CD4-positive, alpha-beta T cell (primary cell): ENCODE measurements at regions of chr11 and their contacts with region 1.

Region 1: GRCh38 chr11:33808228-33808828 is 34.0 kb upstream of the FBXO3 start:
- DNase-seq: peak; percentile 73 to 91 (median 81)
- ATAC-seq: peak; percentile 82
- H3K4me3 ChIP-seq: no peak overlapping the region
- H3K4me3 Mint-ChIP-seq: no peak overlapping the region
- H3K27ac ChIP-seq: no peak overlapping the region
- H3K27ac Mint-ChIP-seq: no peak overlapping the region
- H3K4me1 ChIP-seq: peaks cover 5% of the 10 kb centered on the region
- H3K4me1 Mint-ChIP-seq: no peaks in the 10 kb centered on the region
- H3K27me3 ChIP-seq: peaks cover 4 to 8% of the 10 kb centered on the region in 2 experiments
- H3K27me3 Mint-ChIP-seq: peaks cover 9% of the 10 kb centered on the region
- CTCF ChIP-seq: peak; percentile 88

Region 2: DNA sequence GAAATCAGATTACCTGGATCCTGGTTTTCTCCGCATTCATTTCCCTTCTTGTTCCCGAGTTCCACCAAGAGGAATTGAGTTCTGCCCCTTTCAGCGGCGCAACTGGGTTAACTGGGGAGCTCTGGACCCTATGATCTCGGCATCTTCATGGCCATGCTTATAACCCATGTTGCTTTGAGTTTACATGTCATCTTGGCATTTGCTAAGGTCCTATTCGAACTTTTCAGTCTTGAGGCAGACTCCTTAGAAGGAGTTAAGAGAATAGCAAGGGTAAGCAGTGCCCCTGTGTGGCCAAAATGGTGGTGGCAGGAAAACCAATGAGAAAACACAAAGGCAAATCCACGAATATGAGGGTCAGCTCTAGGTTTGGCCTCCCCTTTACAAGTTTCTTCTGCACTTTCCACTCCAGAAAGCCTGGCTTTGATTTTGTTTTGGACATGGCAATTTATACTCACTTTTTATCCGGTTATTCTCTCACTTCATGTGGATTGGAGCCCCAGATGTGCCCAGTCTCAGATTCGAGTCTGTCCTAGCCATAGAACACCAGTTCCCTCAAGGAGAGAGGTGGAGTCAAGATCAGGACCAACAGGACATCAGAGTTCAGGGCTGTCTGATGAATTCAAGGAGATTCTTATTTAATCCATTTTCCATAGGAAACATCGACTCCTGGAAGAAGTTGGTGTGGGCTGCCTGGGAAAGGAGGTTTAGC is 21.3 kb after region 1 on chr11:
- CTCF ChIA-PET with region 1: interaction called, 4 read pairs
- POLR2A ChIA-PET with region 1: no interaction called
- intact Hi-C with region 1: loop called (anchors 1 kb)
- DNase-seq: peak; percentile 9 to 77 (median 48)
- ATAC-seq: peak; percentile 88
- H3K4me3 ChIP-seq: peak overlapping the region; percentile 28
- H3K4me3 Mint-ChIP-seq: peak overlapping the region; percentile 79
- H3K27ac ChIP-seq: no peak overlapping the region
- H3K27ac Mint-ChIP-seq: no peak overlapping the region
- H3K4me1 ChIP-seq: peaks cover 11% of the 10 kb centered on the region
- H3K4me1 Mint-ChIP-seq: peaks cover 7% of the 10 kb centered on the region
- H3K27me3 ChIP-seq: peaks cover 35 to 54% of the 10 kb centered on the region in 2 experiments
- H3K27me3 Mint-ChIP-seq: peaks cover 69% of the 10 kb centered on the region
- CTCF ChIP-seq: peak; percentile 67

Region 3: GRCh38 chr11:33970984-33971466 is 162.7 kb after region 1 on chr11:
- CTCF ChIA-PET with region 1: no interaction called
- POLR2A ChIA-PET with region 1: no interaction called
- intact Hi-C with region 1: loop called in 1 of 2 experiments (anchors 5 kb)
- DNase-seq: peak in 5 of 14 experiments; percentile 4 to 49 (median 24)
- ATAC-seq: no peak
- H3K4me3 ChIP-seq: no peak overlapping the region
- H3K4me3 Mint-ChIP-seq: no peak overlapping the region
- H3K27ac ChIP-seq: no peak overlapping the region
- H3K27ac Mint-ChIP-seq: no peak overlapping the region
- H3K4me1 ChIP-seq: no peaks in the 10 kb centered on the region
- H3K4me1 Mint-ChIP-seq: no peaks in the 10 kb centered on the region
- H3K27me3 ChIP-seq: peaks cover 0 to 3% of the 10 kb centered on the region in 2 experiments
- H3K27me3 Mint-ChIP-seq: peaks cover 5% of the 10 kb centered on the region
- CTCF ChIP-seq: no peak

Region 4: GRCh38 chr11:33987975-33988580 is 179.8 kb after region 1 on chr11:
- CTCF ChIA-PET with region 1: interaction called, 8 read pairs
- POLR2A ChIA-PET with region 1: interaction called, 3 read pairs
- intact Hi-C with region 1: loop called in 1 of 2 experiments (anchors 5 kb)
- DNase-seq: peak; percentile 49 to 88 (median 63)
- ATAC-seq: peak; percentile 86
- H3K4me3 ChIP-seq: no peak overlapping the region
- H3K4me3 Mint-ChIP-seq: no peak overlapping the region
- H3K27ac ChIP-seq: no peak overlapping the region
- H3K27ac Mint-ChIP-seq: no peak overlapping the region
- H3K4me1 ChIP-seq: no peaks in the 10 kb centered on the region
- H3K4me1 Mint-ChIP-seq: peaks cover 6% of the 10 kb centered on the region
- H3K27me3 ChIP-seq: peaks cover 0 to 2% of the 10 kb centered on the region in 2 experiments
- H3K27me3 Mint-ChIP-seq: peaks cover 9% of the 10 kb centered on the region
- CTCF ChIP-seq: peak; percentile 64

Region 5: GRCh38 chr11:33996498-33997454 is 188.4 kb after region 1 on chr11:
- CTCF ChIA-PET with region 1: no interaction called
- POLR2A ChIA-PET with region 1: no interaction called
- intact Hi-C with region 1: loop called in 1 of 2 experiments (anchors 5 kb)
- DNase-seq: peak; percentile 53 to 85 (median 66)
- ATAC-seq: peak; percentile 100
- H3K4me3 ChIP-seq: no peak overlapping the region
- H3K4me3 Mint-ChIP-seq: peak overlapping the region; percentile 55
- H3K27ac ChIP-seq: no peak overlapping the region
- H3K27ac Mint-ChIP-seq: no peak overlapping the region
- H3K4me1 ChIP-seq: peaks cover 7% of the 10 kb centered on the region
- H3K4me1 Mint-ChIP-seq: peaks cover 7% of the 10 kb centered on the region
- H3K27me3 ChIP-seq: no peaks in the 10 kb centered on the region
- H3K27me3 Mint-ChIP-seq: peaks cover 23% of the 10 kb centered on the region
- CTCF ChIP-seq: peak; percentile 76

Region 6: DNA sequence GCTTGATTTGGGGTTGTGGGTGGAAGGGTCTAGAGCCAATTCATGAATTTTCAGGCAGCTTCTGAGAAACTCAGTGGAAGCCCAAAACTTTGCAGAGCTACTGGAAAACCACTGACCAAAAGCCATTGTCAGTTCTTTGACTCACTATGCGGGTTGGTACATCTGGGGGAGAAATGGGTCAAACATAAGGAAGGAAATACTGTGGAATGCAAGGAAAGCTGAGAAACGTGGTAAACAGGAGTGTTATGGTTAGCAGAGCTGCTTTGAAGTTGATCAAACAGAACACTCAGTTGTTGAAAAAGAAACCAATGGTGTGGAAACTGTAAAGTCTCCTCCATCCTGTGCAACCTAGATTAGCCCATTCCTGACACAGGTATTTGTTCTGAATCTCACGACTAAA is 555.8 kb after region 1 on chr11:
- CTCF ChIA-PET with region 1: no interaction called
- POLR2A ChIA-PET with region 1: no interaction called
- intact Hi-C with region 1: loop called in 1 of 2 experiments (anchors 2 kb)
- DNase-seq: peak in 1 of 14 experiments; percentile 22
- ATAC-seq: no peak
- H3K4me3 ChIP-seq: no peak overlapping the region
- H3K4me3 Mint-ChIP-seq: no peak overlapping the region
- H3K27ac ChIP-seq: no peak overlapping the region
- H3K27ac Mint-ChIP-seq: no peak overlapping the region
- H3K4me1 ChIP-seq: peaks cover under 1% of the 10 kb centered on the region
- H3K4me1 Mint-ChIP-seq: peaks cover 12% of the 10 kb centered on the region
- H3K27me3 ChIP-seq: peaks cover 0 to 10% of the 10 kb centered on the region in 2 experiments
- H3K27me3 Mint-ChIP-seq: peaks cover 34% of the 10 kb centered on the region
- CTCF ChIP-seq: no peak

Region 7: DNA sequence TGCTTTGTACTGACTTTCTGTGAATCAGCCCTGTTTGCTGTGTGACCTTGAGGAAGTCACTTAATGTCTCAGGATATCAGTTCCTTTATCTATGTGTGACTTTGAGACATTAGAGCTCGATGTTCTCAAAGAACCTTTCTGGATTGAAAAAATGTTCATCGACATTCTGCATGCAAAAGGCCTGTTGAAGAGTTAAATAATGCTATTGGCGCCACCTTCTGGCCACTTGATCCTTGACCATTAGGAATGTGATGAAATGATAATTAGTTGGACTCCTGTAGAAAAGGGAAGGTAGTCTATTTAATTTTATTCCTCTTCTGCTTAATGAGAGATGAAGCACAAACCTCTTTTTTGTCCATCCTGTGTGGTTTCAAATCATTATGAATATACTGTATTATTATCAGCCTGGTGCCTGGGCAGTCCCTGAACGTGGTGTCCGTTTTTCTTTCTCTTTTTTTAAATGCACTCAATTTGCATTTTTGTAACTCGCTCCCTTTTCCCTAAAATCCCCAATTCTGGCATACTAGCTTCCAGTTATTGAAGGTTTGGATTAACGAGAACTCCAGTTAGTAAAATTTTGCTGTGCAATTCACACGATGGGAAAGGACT is 684.6 kb after region 1 on chr11:
- CTCF ChIA-PET with region 1: no interaction called
- POLR2A ChIA-PET with region 1: no interaction called
- intact Hi-C with region 1: loop called (anchors 1 kb)
- DNase-seq: peak in 12 of 14 experiments; percentile 7 to 64 (median 17)
- ATAC-seq: no peak
- H3K4me3 ChIP-seq: no peak overlapping the region
- H3K4me3 Mint-ChIP-seq: no peak overlapping the region
- H3K27ac ChIP-seq: no peak overlapping the region
- H3K27ac Mint-ChIP-seq: no peak overlapping the region
- H3K4me1 ChIP-seq: no peaks in the 10 kb centered on the region
- H3K4me1 Mint-ChIP-seq: no peaks in the 10 kb centered on the region
- H3K27me3 ChIP-seq: peaks cover 2 to 3% of the 10 kb centered on the region in 2 experiments
- H3K27me3 Mint-ChIP-seq: peaks cover 5% of the 10 kb centered on the region
- CTCF ChIP-seq: peak; percentile 71

Region 8: DNA sequence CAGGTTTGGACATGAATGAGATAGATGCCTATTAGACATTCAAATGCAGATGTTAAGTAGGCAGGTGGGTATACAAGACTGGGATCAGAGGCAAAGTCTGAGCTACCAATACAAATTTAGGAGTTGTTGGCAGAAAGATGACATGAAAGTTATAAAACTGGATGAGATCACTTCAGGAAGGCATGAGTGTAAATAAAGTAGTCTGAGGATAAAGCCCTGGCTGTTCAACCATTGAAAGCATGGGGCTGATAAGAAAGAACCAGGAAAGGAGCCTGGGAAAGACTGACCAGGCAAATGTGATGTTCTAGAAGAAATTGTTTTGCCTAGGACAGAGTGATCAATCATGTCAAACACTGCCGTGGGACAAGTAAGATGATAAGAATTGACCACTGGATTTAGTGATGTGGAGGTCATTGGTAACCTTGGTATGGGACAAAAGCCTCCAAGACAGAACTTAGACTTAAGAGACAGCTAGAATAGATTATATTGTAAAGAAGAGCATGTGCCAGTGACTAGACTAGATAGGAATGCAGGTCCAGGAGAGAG is 911.0 kb after region 1 on chr11:
- CTCF ChIA-PET with region 1: no interaction called
- POLR2A ChIA-PET with region 1: no interaction called
- intact Hi-C with region 1: no loop called
- DNase-seq: no peak
- ATAC-seq: no peak
- H3K4me3 ChIP-seq: no peak overlapping the region
- H3K4me3 Mint-ChIP-seq: no peak overlapping the region
- H3K27ac ChIP-seq: no peak overlapping the region
- H3K27ac Mint-ChIP-seq: no peak overlapping the region
- H3K4me1 ChIP-seq: no peaks in the 10 kb centered on the region
- H3K4me1 Mint-ChIP-seq: no peaks in the 10 kb centered on the region
- H3K27me3 ChIP-seq: peaks cover 2 to 3% of the 10 kb centered on the region in 2 experiments
- H3K27me3 Mint-ChIP-seq: peaks cover 8% of the 10 kb centered on the region
- CTCF ChIP-seq: no peak